Activated B cell treated with CpG ODN at 0.5 μM for 24 hours (primary cell): ENCODE measurements at regions of chr10 and their contacts with region 1.

Region 1: DNA sequence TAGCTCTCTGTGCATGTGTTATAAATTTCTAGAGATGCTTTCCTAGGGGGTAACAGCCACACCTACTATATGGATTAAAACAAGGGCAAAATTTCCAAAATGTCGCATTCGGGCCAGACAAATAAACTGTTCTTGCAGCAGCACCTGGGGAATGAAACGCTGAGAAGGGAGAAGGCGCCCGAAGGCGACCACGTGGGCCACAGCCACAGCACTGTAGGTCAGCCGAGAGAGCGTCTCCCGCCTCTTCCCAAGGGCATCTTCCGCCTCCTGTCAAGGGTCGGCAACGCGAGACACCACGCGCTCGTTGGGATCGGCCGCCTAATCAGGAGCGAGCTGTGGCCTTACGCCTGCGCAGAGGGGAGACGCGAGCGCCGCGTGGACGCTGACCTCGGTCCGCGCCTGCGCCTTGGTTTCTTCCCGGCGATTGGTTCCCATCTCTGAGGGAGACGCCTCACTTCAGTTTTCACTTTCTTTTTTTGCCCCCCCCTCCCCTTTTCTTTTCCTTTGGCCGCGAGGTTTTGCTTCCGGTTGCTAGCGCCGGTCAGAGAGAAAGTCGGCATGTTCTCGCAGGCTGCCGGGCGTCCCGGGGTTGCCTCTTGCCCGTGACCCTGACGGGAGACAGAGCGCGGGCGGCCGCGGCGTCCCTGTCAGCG is at the start of gene TASOR2:
- DNase-seq: peak; percentile 94
- ATAC-seq: peak; percentile 83
- H3K4me3 Mint-ChIP-seq: peak within 1 kb of the TSS; percentile 99
- H3K27ac Mint-ChIP-seq: peak within 1 kb of the TSS; percentile 94
- H3K4me1 Mint-ChIP-seq: peaks cover 44% of the 10 kb centered on the region
- H3K27me3 Mint-ChIP-seq: no peaks in the 10 kb centered on the region
- CTCF ChIP-seq: no peak
- total RNA-seq, gene TASOR2: 69.8 and 81.4 TPM in 2 replicates

Region 2: DNA sequence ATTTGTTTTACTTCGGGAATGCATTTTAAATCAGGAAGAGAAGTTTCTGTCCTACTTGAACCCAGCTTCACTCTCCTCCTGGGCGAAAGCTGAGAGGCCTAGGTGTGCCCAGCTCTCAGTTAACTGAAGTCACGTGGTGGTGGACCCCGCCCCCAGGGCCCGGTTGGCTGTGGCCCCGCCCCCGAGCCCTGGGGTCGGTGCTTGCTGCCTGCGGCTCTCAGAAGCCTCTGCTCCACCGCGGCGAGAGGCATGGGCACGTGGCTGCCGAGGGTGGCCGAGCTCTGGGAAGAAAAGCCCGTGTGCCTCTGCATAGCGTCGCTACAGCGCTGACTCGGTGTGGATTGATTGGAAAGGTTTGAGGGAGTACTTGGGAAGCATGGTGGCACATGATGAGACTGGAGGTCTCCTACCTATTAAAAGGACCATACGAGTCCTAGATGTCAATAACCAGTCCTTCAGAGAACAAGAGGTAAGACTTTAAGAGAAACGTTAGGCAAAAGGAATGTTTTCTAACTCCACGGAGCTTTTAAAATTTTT is 238.0 kb before region 1 on chr10:
- CTCF ChIA-PET with region 1: no interaction called
- POLR2A ChIA-PET with region 1: interaction called, 3 read pairs
- intact Hi-C with region 1: loop called (anchors 1 kb)
- DNase-seq: peak; percentile 90
- ATAC-seq: peak; percentile 91
- H3K4me3 Mint-ChIP-seq: peak overlapping the region; percentile 86
- H3K27ac Mint-ChIP-seq: peak overlapping the region; percentile 87
- H3K4me1 Mint-ChIP-seq: peaks cover 56% of the 10 kb centered on the region
- H3K27me3 Mint-ChIP-seq: no peaks in the 10 kb centered on the region
- CTCF ChIP-seq: no peak

Region 3: DNA sequence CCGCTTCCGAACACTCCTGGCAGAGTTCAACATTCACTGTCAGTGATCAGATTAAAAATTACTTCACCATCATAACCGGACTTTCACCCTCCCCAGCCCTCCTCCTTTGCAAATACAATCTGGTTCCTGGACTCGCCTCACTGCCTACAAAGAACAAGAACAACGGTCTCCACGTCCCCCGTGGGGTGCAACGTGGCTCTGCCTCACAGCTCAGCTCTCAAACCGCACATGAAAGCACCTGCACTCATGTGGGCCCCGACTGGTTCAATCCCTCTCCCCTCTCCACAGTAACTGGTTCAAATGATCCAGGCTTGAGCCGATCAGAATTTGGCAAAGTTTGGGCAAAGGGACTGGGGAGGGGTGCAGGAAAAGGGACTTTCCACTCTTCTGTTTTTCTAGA is 39.1 kb before region 1 on chr10:
- CTCF ChIA-PET with region 1: no interaction called
- POLR2A ChIA-PET with region 1: interaction called, 4 read pairs
- intact Hi-C with region 1: loop called (anchors 5 kb)
- DNase-seq: peak; percentile 29
- ATAC-seq: peak; percentile 91
- H3K4me3 Mint-ChIP-seq: peak overlapping the region; percentile 53
- H3K27ac Mint-ChIP-seq: peak overlapping the region; percentile 27
- H3K4me1 Mint-ChIP-seq: peaks cover 25% of the 10 kb centered on the region
- H3K27me3 Mint-ChIP-seq: no peaks in the 10 kb centered on the region
- CTCF ChIP-seq: no peak

Region 4: DNA sequence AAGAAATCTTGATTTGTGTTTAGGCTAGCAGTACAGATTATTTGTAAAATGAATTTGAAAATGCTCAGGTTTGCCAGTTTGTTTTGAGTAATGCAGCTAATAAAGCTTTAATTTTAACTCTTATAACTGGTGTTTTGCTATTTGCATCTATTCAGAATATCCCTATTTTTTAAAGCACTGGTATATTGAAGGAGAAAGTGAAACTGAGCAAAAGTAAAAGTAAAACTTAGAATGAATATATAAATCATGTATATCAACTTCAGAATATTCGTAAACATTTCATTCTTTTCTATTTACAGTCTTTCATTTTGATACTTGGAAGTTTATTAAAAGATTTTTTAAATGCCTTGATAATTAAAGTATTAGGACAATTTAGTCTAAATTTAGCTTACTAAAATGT is 26.4 kb after region 1 on chr10:
- CTCF ChIA-PET with region 1: no interaction called
- POLR2A ChIA-PET with region 1: interaction called, 6 read pairs
- intact Hi-C with region 1: loop called (anchors 1 kb)
- DNase-seq: no peak
- ATAC-seq: no peak
- H3K4me3 Mint-ChIP-seq: peak overlapping the region; percentile 52
- H3K27ac Mint-ChIP-seq: no peak overlapping the region
- H3K4me1 Mint-ChIP-seq: peaks cover 69% of the 10 kb centered on the region
- H3K27me3 Mint-ChIP-seq: no peaks in the 10 kb centered on the region
- CTCF ChIP-seq: no peak

Region 5: DNA sequence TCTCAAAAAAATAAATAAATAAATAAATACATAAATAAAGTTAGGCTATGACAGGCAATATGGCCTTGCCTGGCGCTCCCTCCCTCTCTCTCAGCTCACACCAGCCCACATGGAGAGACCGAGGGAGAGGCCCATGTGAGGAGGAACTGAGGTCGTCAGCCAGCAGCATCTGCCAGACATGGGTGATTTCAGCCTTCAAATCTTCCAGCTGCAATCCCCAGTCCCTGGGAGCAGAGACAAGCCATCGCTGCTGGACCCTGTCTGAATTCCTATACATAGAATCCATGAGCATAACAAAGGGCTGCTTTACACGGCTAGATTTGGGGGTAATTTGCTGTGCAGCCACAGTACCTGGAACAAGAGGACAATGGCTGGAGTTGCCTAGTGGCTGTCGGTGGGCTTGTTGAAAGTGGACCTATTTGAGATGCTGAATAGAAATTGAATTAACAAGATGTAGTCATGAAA is 169.7 kb after region 1 on chr10:
- CTCF ChIA-PET with region 1: no interaction called
- POLR2A ChIA-PET with region 1: no interaction called
- intact Hi-C with region 1: loop called (anchors 1 kb)
- DNase-seq: no peak
- ATAC-seq: no peak
- H3K4me3 Mint-ChIP-seq: no peak overlapping the region
- H3K27ac Mint-ChIP-seq: peak overlapping the region; percentile 15
- H3K4me1 Mint-ChIP-seq: peaks cover 47% of the 10 kb centered on the region
- H3K27me3 Mint-ChIP-seq: no peaks in the 10 kb centered on the region
- CTCF ChIP-seq: no peak

Region 6: GRCh38 chr10:5977471-5978229 is 293.2 kb after region 1 on chr10 and contains the start of gene IL15RA:
- CTCF ChIA-PET with region 1: no interaction called
- POLR2A ChIA-PET with region 1: interaction called, 4 read pairs
- intact Hi-C with region 1: loop called (anchors 2 kb)
- DNase-seq: peak; percentile 75
- ATAC-seq: peak; percentile 70
- H3K4me3 Mint-ChIP-seq: peak within 1 kb of the TSS; percentile 96
- H3K27ac Mint-ChIP-seq: peak within 1 kb of the TSS; percentile 91
- H3K4me1 Mint-ChIP-seq: peaks cover 41% of the 10 kb centered on the region
- H3K27me3 Mint-ChIP-seq: no peaks in the 10 kb centered on the region
- CTCF ChIP-seq: no peak
- total RNA-seq, gene IL15RA: 19.1 and 19.8 TPM in 2 replicates

Region 7: DNA sequence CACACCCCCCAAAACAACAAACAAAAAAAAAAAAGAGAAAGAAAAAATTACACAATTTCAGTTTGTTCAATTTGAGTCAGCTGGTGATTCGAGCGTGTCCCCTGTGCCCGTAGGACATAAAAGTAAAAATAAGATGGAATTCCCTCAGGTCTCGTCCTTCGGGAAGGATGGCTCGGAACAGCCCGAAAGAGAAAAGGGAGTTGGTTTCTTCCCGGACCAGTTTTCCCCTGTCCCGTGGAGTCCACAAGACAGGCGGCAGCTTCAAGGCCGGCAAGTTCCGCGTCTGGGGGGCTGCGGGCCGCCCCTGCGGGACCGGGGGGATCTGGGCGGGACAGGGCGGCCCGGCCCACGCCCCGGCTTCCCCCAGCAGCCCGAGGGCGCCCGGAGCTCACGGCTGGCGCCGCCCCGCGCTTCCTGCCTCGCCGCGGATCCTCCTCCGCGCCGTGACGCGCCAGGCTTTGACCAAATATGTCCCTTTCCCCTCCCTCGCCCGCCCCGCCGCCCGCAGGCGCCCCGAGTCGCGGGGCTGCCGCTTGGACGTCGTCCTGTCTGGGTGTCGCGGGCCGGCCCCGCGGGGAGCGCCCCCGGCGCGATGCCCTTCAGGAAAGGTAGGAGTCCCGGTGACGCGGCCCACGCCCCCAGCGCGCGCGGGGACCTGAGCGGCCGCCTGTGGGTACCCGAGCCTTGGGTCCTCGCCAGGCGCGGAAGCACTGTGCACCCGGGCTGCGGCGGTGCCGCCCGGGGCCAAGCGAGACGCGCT is 460.1 kb after region 1 on chr10:
- CTCF ChIA-PET with region 1: no interaction called
- POLR2A ChIA-PET with region 1: no interaction called
- intact Hi-C with region 1: loop called (anchors 5 kb)
- DNase-seq: peak; percentile 85
- ATAC-seq: peak; percentile 86
- H3K4me3 Mint-ChIP-seq: peak overlapping the region; percentile 88
- H3K27ac Mint-ChIP-seq: peak overlapping the region; percentile 77
- H3K4me1 Mint-ChIP-seq: peaks cover 66% of the 10 kb centered on the region
- H3K27me3 Mint-ChIP-seq: no peaks in the 10 kb centered on the region
- CTCF ChIP-seq: no peak